ENCODE measurements at regions of chr6 and their contacts with region 1.

Region 1: DNA sequence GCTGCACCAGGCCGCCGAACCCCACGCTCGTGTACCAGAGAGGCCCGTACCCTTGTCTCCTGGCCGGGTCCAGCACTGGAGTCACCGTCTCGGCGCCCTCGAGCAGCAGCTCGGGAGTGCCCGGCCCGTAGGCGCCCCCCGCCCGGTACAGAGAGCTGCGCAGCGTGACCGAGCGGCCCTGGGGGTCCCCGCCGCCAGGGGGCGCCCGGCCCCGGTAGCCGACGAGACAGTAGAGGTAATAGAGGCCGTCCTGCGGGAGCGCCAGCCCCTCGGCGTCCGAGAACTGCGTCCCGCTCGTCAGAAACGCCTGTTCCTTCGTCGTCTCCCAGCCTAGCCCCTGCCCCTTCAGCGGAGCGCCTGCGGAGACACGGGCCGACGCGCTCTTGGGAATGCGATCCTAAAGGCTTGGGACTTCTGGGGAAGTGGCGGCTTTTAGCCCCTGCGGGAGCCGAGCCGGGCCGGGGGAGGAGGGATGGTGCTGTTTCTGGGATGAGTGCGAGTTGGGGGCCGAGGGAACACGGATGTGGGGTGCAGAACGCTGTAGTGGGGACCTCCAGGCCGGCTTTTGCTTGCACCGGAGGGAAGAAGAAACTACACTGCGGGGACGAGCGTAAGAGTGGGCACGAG is 1.3 kb downstream of the LTB start:
- DNase-seq: peak; percentile 97
- H3K4me3 ChIP-seq: peak overlapping the region; percentile 67 to 86 (median 70)
- H3K27ac ChIP-seq: peak overlapping the region; percentile 77 to 84 (median 80)
- H3K4me1 ChIP-seq: peaks cover 17 to 25% (median 22%) of the 10 kb centered on the region in 4 donors
- H3K27me3 ChIP-seq: no peaks in the 10 kb centered on the region
- CTCF ChIP-seq: peak in 2 of 3 experiments; percentile 94
- EP300 ChIP-seq: no peak
- POLR2A ChIP-seq: no peak

Region 2: GRCh38 chr6:31546962-31547726 is 33.8 kb before region 1 on chr6 and contains the start of gene NFKBIL1:
- intact Hi-C with region 1: loop called (anchors 5 kb)
- DNase-seq: peak; percentile 99
- H3K4me3 ChIP-seq: peak within 1 kb of the TSS; percentile 49 to 60 (median 54)
- H3K27ac ChIP-seq: peak within 1 kb of the TSS; percentile 82 to 86 (median 84)
- H3K4me1 ChIP-seq: peaks cover 20 to 54% (median 50%) of the 10 kb centered on the region in 4 donors
- H3K27me3 ChIP-seq: no peaks in the 10 kb centered on the region
- CTCF ChIP-seq: no peak
- EP300 ChIP-seq: no peak
- POLR2A ChIP-seq: no peak
- total RNA-seq, gene NFKBIL1: 24.4 to 42.6 (median 29.6) TPM